ENCODE measurements at regions of chr1 and their contacts with region 1.

Region 1: DNA sequence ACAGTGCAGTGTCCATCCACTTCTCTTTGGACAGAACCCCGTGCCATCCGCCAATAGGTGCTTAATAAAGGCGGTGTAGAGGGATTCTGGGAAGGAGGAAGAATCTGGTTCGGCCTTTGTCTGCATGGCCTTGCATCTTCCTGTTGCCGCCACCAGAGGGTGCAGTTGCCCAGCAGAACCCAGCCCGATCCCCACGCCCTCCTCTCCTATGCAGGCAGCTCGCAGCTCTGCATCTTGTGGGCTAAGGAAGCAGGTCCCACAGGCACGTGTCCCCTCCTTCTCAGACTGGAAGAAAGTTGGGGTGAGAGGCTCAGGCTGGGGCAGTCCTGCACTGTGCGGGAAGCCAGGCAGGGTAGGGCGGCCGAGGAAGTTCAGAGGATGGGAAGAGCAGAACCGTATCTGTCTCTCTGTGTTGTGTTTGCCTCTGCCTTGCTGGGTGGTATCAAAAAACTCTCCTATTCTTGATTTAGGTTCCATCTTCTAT is 20.8 kb downstream of the NAV1 start:
- DNase-seq: peak; percentile 85
- H3K4me3 ChIP-seq: no peak overlapping the region; a peak in 1 of 4 replicates
- H3K27ac ChIP-seq: peak overlapping the region; percentile 51 to 95
- H3K4me1 ChIP-seq: peaks cover 60 to 71% of the 10 kb centered on the region in 2 experiments
- H3K27me3 ChIP-seq: no peaks in the 10 kb centered on the region
- CTCF ChIP-seq: peak; percentile 91
- EP300 ChIP-seq: no peak
- RAD21 ChIP-seq: peak; percentile 99

Region 2: DNA sequence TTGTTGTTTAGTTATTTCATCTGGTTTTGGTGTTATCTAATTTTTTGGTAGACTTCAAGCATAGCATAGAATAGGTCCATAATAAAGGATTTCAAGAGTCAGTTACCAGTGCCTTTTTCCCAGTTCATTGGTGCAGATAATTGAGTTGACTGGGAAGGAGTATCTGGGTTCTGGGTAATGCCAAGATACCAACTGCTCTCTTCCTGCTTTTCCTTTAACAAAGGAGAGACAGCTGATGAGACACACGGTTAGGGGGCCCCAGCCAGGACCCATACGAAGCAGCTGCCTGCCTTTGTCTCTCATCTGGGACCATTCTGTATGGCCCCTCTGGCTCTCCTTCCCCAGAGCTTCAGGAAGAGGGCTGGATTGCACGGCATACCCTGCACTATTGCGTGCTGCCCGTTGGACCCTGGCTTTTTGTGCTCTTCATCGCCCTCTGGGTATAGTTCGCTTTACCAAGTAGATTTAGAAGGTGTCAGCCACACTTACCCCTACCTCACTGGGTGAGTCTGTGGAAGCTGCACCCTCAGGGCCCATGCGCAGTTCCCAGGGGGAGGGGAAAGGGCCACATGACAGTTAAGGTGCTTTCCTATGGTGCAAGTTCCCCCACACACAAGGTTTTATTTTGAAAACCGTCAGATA is 13.7 kb before region 1 on chr1:
- CTCF ChIA-PET with region 1: interaction called, 176 read pairs
- POLR2A ChIA-PET with region 1: no interaction called
- DNase-seq: peak; percentile 35
- H3K4me3 ChIP-seq: no peak overlapping the region
- H3K27ac ChIP-seq: no peak overlapping the region; a peak in 1 of 4 replicates
- H3K4me1 ChIP-seq: peaks cover 15 to 36% of the 10 kb centered on the region in 2 experiments
- H3K27me3 ChIP-seq: no peaks in the 10 kb centered on the region
- CTCF ChIP-seq: peak; percentile 23
- EP300 ChIP-seq: no peak
- RAD21 ChIP-seq: no peak

Region 3: DNA sequence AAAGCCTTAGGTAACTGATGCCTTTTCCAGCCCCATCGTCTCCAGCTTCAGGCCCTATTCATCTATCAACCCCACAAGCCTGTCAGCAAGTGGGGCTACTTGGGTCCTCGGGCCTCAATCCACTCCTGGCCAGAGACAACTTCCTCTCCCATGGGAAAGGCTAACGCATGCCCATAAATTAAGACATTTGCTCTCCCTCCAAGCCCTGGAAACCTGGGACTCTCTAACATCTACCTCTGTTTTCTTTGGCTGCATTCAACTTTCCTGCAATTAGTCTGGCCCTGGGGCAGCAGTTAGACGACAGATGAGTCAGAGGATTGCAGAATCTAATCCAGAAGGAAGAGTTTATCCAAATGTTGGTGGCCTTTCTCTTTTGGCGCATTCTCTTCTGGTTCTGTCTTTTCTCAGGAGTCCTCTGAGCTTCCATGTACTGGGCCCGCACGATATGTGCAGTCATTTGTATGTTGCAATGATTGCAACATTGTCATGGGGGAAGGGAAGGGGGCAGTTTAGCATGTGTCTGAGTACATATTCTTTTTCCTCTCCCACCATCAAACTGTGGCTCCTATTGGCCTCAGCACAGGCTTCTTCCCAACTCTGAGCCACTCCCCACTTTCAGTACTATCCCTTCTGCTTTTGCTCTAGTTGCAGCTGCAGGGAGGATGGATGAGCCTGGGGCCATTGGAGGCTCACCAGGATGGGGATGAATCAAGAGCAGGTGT is 33.6 kb after region 1 on chr1:
- CTCF ChIA-PET with region 1: interaction called, 10 read pairs
- POLR2A ChIA-PET with region 1: no interaction called
- DNase-seq: peak; percentile 71
- H3K4me3 ChIP-seq: no peak overlapping the region
- H3K27ac ChIP-seq: peak overlapping the region; percentile 91 to 98
- H3K4me1 ChIP-seq: peaks cover 39 to 42% of the 10 kb centered on the region in 2 experiments
- H3K27me3 ChIP-seq: no peaks in the 10 kb centered on the region
- CTCF ChIP-seq: no peak
- EP300 ChIP-seq: peak; percentile 85 to 93
- RAD21 ChIP-seq: peak; percentile 35

Region 4: DNA sequence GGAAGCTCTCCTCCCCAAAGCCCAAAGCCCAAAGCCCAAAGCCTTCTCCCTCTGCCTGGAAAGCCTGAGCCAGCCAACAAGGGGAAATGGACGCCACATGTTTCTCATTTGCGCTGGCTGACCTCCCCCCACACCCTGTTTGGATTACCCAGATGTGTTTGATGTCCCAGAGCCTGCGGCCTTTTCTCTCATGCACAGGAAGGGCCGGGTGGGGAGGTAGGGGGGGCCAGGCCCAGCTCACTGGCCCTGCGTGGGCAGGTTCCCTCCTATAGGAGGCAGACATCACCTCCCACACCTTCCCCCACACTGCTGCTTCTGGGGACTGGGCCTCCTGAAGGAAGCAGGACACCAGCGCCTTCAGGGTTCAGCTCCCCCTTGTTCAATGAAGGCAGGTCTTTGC is 95.5 kb after region 1 on chr1:
- CTCF ChIA-PET with region 1: interaction called, 75 read pairs
- POLR2A ChIA-PET with region 1: interaction called, 13 read pairs
- DNase-seq: peak; percentile 95
- H3K4me3 ChIP-seq: no peak overlapping the region; a peak in 1 of 4 replicates
- H3K27ac ChIP-seq: peak overlapping the region; percentile 63 to 94
- H3K4me1 ChIP-seq: peaks cover 58 to 61% of the 10 kb centered on the region in 2 experiments
- H3K27me3 ChIP-seq: no peaks in the 10 kb centered on the region
- CTCF ChIP-seq: peak; percentile 38
- EP300 ChIP-seq: peak; percentile 41 to 89; a peak in 3 of 4 replicates
- RAD21 ChIP-seq: peak; percentile 51

Region 5: DNA sequence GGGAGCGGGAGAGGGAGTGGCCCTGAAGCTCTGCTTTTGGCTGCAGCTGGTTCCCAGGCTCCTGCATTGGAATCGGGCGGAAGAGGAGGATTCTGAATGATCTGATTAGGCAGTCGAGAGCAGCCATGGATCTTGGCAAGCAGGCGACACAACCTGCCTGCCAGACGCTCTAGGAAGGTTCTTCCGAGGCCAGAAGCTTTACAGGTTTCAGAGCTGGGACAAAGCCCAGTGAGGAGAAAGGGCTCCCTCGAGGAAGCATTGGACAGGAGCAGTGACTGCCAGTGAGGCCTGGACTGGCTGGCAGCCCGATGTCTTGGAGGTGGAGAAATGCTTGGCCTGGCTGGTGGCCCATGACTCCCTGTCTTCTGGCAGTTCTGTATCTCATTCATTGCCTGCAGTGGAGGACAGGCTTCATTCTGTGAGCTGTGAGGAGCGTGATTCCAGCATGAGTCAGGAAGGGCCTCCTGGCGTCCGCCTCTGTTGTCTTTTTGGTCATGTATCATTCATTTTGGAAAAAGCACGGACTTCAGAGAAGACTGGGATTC is 136.6 kb after region 1 on chr1:
- CTCF ChIA-PET with region 1: interaction called, 53 read pairs
- POLR2A ChIA-PET with region 1: no interaction called
- DNase-seq: peak; percentile 76
- H3K4me3 ChIP-seq: no peak overlapping the region
- H3K27ac ChIP-seq: peak overlapping the region; percentile 97
- H3K4me1 ChIP-seq: peaks cover 56 to 67% of the 10 kb centered on the region in 2 experiments
- H3K27me3 ChIP-seq: no peaks in the 10 kb centered on the region
- CTCF ChIP-seq: no peak
- EP300 ChIP-seq: peak; percentile 66 to 70; a peak in 2 of 4 replicates
- RAD21 ChIP-seq: no peak

Region 6: GRCh38 chr1:201783572-201783971 is 223.9 kb after region 1 on chr1:
- CTCF ChIA-PET with region 1: interaction called, 14 read pairs
- POLR2A ChIA-PET with region 1: no interaction called
- DNase-seq: no peak
- H3K4me3 ChIP-seq: no peak overlapping the region
- H3K27ac ChIP-seq: peak overlapping the region in 1 of 2 experiments; percentile 99; a peak in 1 of 4 replicates
- H3K4me1 ChIP-seq: peaks cover 0 to 64% of the 10 kb centered on the region in 2 experiments
- H3K27me3 ChIP-seq: no peaks in the 10 kb centered on the region
- CTCF ChIP-seq: no peak
- EP300 ChIP-seq: no peak
- RAD21 ChIP-seq: no peak

Region 7: GRCh38 chr1:202656951-202657646 is 1097.4 kb after region 1 on chr1:
- CTCF ChIA-PET with region 1: no interaction called
- POLR2A ChIA-PET with region 1: no interaction called
- DNase-seq: no peak
- H3K4me3 ChIP-seq: no peak overlapping the region
- H3K27ac ChIP-seq: no peak overlapping the region
- H3K4me1 ChIP-seq: peaks cover 0 to 4% of the 10 kb centered on the region in 2 experiments; a peak in 1 of 4 replicates
- H3K27me3 ChIP-seq: no peaks in the 10 kb centered on the region; the same call in none of the 2 replicates
- CTCF ChIP-seq: peak; percentile 30; the same call in 1 of the 2 replicates
- EP300 ChIP-seq: no peak
- RAD21 ChIP-seq: no peak